ENCODE measurements at regions of chr9 and their contacts with region 1.

Region 1: GRCh38 chr9:27333241-27334052 is 36.5 kb upstream of the EQTN start:
- DNase-seq: peak in 1 of 2 donors; percentile 58
- H3K4me3 ChIP-seq: no peak overlapping the region
- CTCF ChIP-seq: no peak
- POLR2A ChIP-seq: no peak

Region 2: DNA sequence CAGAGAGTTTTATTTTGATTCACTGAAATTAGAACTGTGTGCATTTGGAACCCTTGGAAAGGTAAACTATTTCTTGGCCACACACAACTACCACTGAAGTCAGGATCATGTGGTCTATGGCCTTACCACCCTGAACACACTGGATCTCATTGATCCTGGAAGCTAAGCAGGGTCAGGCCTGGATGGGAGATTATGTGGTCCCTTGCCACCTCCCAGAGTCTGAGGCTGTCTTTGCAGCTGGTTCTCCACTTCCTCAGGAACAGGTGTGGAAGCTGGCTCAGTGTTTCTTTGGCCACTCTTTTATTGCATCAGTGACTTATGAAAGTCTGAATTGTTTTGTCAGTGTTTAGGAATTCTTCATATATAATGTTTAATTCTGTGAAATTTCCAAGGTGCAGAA is 135.3 kb before region 1 on chr9:
- intact Hi-C with region 1: no loop called
- DNase-seq: no peak
- H3K4me3 ChIP-seq: no peak overlapping the region
- CTCF ChIP-seq: no peak
- POLR2A ChIP-seq: no peak

Region 3: GRCh38 chr9:27548055-27548741 is 214.8 kb after region 1 on chr9:
- intact Hi-C with region 1: loop called (anchors 5 kb)
- DNase-seq: no peak
- H3K4me3 ChIP-seq: no peak overlapping the region
- CTCF ChIP-seq: no peak
- POLR2A ChIP-seq: no peak

Region 4: DNA sequence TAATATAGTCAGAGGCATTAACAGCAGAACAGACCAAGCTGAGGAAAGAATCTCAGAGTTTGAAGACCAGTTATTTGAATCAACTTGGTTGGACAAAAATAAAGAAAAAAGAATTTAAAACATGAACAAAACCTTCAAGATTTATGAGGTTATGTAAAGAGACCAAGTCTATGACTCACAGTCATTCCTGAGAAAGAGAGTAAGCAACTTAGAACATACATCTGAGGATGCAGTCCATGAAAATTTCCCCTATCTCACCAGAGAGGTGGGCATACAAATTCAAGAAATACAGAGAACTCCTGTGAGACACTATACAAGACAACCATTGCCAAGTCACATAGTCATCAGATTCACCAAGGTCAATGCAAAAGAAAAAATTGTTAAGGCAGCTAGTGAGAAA is 257.2 kb after region 1 on chr9:
- intact Hi-C with region 1: no loop called
- DNase-seq: no peak
- H3K4me3 ChIP-seq: no peak overlapping the region
- CTCF ChIP-seq: no peak
- POLR2A ChIP-seq: no peak

Measured in lower leg skin (tissue), 4 donors.